Activated CD4-positive, alpha-beta T cell treated with anti-CD3 and anti-CD28 coated beads, Interleukin-2, amount 10 ng/mL, durations not matched to agents 7 days and 5 days (primary cell): ENCODE measurements at regions of chr7 and their contacts with region 1.

Region 1: DNA sequence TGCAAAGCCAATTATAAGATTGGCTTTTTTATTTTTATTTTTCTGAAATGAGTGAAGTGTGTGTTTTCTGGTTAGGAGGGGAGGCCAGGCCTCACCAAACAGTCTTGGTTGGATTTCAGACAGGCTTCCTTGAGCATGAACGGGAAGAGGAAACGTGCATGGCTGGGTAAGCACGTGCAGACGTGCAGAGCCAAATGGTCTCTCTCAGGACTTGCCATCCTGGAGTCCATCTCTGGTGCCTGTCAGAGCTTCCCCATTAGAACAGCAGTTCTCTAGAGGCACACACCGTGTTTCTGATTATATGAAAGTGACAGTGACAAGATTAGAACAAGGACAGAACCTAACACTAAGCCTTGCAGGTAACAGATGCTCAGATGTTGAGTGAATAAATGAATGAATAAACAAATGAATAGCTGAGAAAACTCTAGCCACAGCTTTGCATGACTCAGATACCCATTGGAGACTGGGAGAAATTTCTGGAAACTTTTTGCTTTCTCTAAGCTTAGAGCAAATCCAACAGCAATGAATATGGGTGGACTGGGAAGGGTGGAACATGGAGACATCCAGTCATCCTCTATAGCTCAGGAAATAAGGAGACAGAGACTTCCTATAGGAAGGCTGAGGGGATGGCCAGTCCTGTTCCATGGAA is 11.8 kb upstream of the CALD1 start:
- DNase-seq: no peak
- H3K4me3 Mint-ChIP-seq: no peak overlapping the region
- H3K27ac Mint-ChIP-seq: no peak overlapping the region
- H3K4me1 Mint-ChIP-seq: no peaks in the 10 kb centered on the region
- H3K27me3 Mint-ChIP-seq: no peaks in the 10 kb centered on the region

Region 2: DNA sequence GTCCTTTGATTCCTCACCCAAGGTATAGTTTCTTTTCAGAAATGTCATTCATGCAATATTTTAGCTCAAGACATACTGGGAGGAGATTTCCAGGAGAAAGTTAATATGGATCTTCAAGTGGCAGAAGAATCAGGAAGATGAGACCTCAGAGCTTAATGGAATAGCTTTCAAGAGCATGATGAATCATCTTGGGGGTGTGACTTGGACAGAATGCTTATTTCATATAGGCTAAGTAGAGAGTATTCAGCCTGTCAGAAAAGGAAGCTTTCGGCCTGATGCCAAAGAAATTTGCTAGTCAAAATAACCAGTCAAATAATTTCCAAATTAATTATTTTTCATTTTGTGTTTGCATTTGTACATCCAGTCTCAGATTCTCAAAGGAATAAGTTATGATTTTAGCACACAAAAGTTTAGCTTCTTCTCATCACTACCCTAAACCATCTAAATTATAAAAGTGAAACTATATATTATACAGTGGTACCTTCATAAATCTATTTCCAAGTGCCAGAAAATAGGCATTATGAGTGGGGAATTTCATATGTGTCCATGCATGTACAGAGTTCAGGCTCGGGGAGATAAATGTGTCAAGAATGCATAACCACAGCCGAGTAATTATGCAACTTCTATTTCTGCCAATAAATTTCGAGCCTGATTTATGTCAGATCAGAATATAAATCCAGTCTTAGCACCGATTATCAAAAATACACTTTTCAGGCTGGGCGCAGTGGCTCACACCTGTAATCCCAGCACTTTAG is 15.5 kb before region 1 on chr7:
- CTCF ChIA-PET with region 1: interaction called, 10 read pairs
- POLR2A ChIA-PET with region 1: no interaction called
- DNase-seq: no peak
- H3K4me3 Mint-ChIP-seq: no peak overlapping the region
- H3K27ac Mint-ChIP-seq: no peak overlapping the region
- H3K4me1 Mint-ChIP-seq: peaks cover 8% of the 10 kb centered on the region
- H3K27me3 Mint-ChIP-seq: no peaks in the 10 kb centered on the region